Mammary epithelial cell (primary cell): ENCODE measurements at regions of chr7 and their contacts with region 1.

Region 1: GRCh38 chr7:118153551-118154177 is 30.3 kb upstream of the LSM8 start:
- DNase-seq: peak; percentile 36
- H3K4me3 ChIP-seq: no peak overlapping the region
- H3K27ac ChIP-seq: no peak overlapping the region
- H3K4me1 ChIP-seq: no peaks in the 10 kb centered on the region
- H3K27me3 ChIP-seq: no peaks in the 10 kb centered on the region
- CTCF ChIP-seq: peak; percentile 65 to 74

Region 2: GRCh38 chr7:117399820-117400422 is 753.7 kb before region 1 on chr7:
- CTCF ChIA-PET with region 1: no interaction called
- dilution Hi-C with region 1: no loop called
- in situ Hi-C with region 1: no loop called
- intact Hi-C with region 1: loop called (anchors 5 kb)
- DNase-seq: no peak
- H3K4me3 ChIP-seq: no peak overlapping the region
- H3K27ac ChIP-seq: no peak overlapping the region
- H3K4me1 ChIP-seq: no peaks in the 10 kb centered on the region
- H3K27me3 ChIP-seq: peaks cover 2% of the 10 kb centered on the region
- CTCF ChIP-seq: peak; percentile 43 to 61

Region 3: DNA sequence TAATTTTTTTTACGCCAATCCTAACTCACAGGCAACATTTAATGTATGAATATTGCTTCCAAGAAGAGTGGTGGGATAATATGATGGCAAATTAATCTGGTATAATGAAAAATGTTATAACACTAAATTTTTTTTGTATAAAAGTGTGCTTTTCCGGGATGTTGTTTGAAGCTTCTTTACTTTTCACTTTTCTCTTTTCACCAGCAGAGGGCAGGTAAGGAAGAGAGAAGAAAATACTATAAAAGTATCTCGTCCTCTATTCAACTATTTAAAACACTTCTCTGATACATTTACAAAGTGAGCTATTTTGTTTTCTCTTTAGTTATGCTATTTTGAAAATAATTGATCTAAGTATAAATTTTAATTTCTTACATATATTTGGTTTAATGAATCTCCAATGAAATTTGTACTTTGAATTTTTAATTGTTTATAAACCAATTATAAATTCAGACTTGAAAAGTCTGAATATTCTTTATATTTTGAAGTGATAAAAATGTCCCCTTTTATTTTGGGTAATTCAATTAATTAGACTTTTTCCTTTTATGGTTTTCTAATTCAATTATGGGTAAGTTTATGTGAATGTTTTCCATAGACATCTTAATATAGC is 694.6 kb before region 1 on chr7:
- CTCF ChIA-PET with region 1: no interaction called
- dilution Hi-C with region 1: no loop called
- in situ Hi-C with region 1: loop called (anchors 25 kb)
- intact Hi-C with region 1: loop called (anchors 1 kb)
- DNase-seq: no peak
- H3K4me3 ChIP-seq: no peak overlapping the region
- H3K27ac ChIP-seq: no peak overlapping the region
- H3K4me1 ChIP-seq: no peaks in the 10 kb centered on the region
- H3K27me3 ChIP-seq: no peaks in the 10 kb centered on the region
- CTCF ChIP-seq: peak; percentile 55 to 62

Region 4: DNA sequence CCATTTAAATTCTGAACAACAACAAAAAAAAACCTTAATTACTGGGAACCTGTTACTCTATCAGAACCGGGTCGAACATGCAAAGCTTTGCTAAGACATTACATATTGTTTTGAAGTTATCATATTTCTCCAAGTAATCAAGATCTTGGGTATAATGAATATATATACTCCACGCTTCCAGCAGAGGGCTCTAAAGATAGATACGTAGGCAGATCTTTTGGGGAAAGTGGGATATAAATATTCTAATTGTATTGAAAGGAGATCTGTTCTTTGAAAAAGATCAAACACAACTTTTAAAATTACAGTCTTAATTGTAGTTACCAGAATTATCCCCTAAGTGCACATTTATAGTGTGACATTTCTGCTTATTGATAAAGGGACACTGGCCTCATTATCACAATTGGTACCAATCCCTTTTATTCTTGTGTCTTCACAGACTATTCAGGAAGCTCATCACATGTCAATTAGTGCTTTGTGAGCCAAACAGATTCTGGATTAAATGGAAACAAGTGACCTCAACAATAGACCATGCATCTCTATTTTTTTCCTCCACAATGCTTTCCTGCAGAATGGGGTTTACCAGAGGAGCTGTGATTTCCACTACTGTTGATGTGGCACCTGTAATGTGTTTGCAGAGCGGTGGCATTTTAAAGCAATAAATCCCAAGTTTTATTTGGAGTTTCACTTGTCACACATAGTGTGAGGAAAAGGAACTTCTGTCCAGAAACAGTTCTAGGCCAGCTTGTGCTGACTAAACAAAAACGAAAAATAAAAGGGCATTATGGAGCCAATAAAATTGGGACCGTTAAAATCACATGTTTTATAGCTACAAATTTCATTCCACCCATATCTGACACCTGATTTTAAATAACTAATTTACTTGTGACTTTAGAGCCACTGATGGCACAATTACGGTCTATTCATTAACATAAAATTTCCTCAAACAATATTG is 402.8 kb before region 1 on chr7:
- CTCF ChIA-PET with region 1: no interaction called
- dilution Hi-C with region 1: no loop called
- in situ Hi-C with region 1: loop called in 1 of 2 experiments (anchors 5 kb)
- intact Hi-C with region 1: loop called (anchors 1 kb)
- DNase-seq: no peak
- H3K4me3 ChIP-seq: no peak overlapping the region
- H3K27ac ChIP-seq: no peak overlapping the region
- H3K4me1 ChIP-seq: no peaks in the 10 kb centered on the region
- H3K27me3 ChIP-seq: no peaks in the 10 kb centered on the region
- CTCF ChIP-seq: peak; percentile 46 to 67

Region 5: GRCh38 chr7:117759950-117760640 is 393.6 kb before region 1 on chr7:
- CTCF ChIA-PET with region 1: no interaction called
- dilution Hi-C with region 1: no loop called
- in situ Hi-C with region 1: loop called in 1 of 2 experiments (anchors 5 kb)
- intact Hi-C with region 1: no loop called
- DNase-seq: no peak
- H3K4me3 ChIP-seq: no peak overlapping the region
- H3K27ac ChIP-seq: no peak overlapping the region
- H3K4me1 ChIP-seq: no peaks in the 10 kb centered on the region
- H3K27me3 ChIP-seq: no peaks in the 10 kb centered on the region
- CTCF ChIP-seq: no peak

Region 6: DNA sequence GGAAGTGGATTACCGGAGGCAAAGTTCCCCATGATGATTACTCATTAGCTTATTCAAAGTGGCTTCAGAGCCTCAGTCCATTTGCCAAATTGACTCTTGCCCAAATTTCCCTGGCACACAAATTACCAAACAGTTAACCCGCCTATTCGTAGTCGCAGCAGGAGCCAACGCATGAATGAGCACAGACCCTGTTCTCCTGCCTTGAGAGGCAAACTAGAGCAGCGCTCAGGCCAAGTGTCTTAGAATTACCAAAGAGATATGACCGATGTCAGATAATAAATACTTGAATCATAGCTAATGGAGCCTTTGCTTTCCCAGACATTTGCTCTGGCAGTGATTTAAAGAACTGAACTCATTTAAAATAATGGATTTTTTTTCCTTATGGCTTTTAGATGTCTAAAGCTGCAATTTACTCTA is 345.3 kb before region 1 on chr7:
- CTCF ChIA-PET with region 1: interaction called, 10 read pairs
- dilution Hi-C with region 1: no loop called
- in situ Hi-C with region 1: no loop called
- intact Hi-C with region 1: no loop called
- DNase-seq: no peak
- H3K4me3 ChIP-seq: no peak overlapping the region
- H3K27ac ChIP-seq: no peak overlapping the region
- H3K4me1 ChIP-seq: no peaks in the 10 kb centered on the region
- H3K27me3 ChIP-seq: no peaks in the 10 kb centered on the region
- CTCF ChIP-seq: no peak

Region 7: DNA sequence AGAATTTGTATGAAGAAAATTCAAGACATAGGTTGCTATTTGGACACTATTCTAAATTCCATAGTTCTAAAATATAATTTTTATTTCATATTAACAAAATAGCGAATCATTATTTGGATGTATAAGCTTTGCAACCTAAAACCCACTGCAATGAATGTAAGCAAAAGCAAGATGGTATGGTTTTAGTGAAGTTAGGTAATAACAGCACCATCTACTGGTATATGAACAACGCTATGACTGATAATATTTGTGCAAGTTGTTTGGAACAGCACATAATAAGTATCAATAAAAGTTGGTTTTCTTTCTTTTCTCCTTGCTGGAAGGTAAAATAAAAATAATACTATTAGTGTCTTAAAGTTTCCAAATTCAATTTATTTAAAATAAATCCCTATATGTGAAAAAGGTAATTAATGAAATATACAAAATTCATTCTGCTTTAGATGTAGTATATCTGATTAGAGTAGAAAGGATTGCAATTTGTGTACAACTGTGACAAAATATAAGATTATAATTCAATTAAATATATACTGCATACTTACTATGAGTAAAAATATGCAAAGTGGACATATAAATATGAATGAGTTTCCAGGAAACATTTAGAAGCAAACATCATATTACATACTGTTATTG is 48.7 kb before region 1 on chr7:
- CTCF ChIA-PET with region 1: no interaction called
- dilution Hi-C with region 1: no loop called
- in situ Hi-C with region 1: no loop called
- intact Hi-C with region 1: loop called (anchors 1 kb)
- DNase-seq: peak; percentile 33
- H3K4me3 ChIP-seq: no peak overlapping the region
- H3K27ac ChIP-seq: no peak overlapping the region
- H3K4me1 ChIP-seq: no peaks in the 10 kb centered on the region
- H3K27me3 ChIP-seq: no peaks in the 10 kb centered on the region
- CTCF ChIP-seq: peak; percentile 61 to 70